ENCODE measurements at regions of chr6 and their contacts with region 1.

Region 1: GRCh38 chr6:104325341-104326172 is 534.2 kb downstream of the HACE1 start:
- DNase-seq: peak; percentile 76
- ATAC-seq: peak; percentile 54
- H3K4me3 ChIP-seq: peak overlapping the region; percentile 34
- H3K27ac ChIP-seq: 0 out of 2 replicates have a peak overlapping the region, but pooled peaks have one; percentile 3
- H3K4me1 ChIP-seq: peaks cover 10% of the 10 kb centered on the region; the same call in 1 of the 2 replicates
- H3K27me3 ChIP-seq: no peaks in the 10 kb centered on the region
- CTCF ChIP-seq: peak; percentile 75

Region 2: DNA sequence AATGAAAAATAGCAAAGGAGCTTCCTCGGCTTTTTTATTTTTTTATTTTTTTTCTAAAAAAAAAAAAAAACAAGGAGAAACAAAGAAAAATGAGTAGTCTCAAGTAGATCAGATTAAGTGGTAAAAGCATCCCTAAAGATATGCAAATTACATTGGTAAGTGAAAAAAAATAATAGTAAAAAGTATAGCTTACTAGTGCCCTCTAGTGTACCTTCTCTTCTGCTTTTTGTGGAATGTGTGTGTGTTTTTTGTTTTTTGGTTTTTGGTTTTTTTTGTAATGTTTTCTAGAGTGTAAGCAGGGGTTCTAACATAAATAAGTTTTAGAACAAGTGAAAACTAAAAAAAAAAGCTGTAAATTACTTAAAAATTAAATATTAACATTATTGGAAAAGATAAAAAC is 527.8 kb before region 1 on chr6:
- CTCF ChIA-PET with region 1: no interaction called
- POLR2A ChIA-PET with region 1: interaction called, 8 read pairs
- intact Hi-C with region 1: loop called (anchors 10 kb)
- DNase-seq: peak; percentile 30
- ATAC-seq: no peak
- H3K4me3 ChIP-seq: no peak overlapping the region
- H3K27ac ChIP-seq: no peak overlapping the region
- H3K4me1 ChIP-seq: no peaks in the 10 kb centered on the region
- H3K27me3 ChIP-seq: no peaks in the 10 kb centered on the region
- CTCF ChIP-seq: peak; percentile 56

Region 3: DNA sequence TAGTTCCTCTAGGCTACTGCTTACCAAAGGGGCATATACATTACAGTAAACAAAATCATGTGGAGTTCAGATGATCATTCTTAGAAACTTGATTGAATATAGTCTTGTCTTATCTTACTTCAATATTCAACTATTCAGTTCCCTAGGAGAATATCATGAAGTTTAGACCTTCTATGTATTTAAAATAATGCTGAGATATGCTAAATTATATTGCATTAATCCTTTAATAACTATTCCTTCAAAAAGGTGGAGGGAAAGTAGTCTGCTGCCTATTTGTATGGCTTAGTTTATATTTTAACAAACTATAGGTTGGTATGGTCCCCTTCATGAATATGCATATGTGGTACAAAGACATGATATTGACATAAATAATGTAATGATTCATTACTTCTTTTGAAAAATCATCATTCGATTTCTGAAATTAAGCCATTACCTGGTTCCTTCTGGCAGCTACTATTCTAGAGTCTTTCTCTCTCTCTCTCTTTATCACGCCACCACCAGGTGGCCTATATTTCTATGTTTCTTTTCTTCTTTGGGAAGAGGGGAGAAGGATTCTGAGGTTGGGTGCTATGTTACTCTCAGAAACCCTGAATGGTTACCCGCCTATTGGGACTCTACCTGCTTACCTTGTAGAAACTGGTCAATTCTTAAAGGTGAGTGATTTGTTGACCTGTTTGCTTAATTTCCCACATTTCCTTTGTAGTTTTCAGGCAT is 321.6 kb before region 1 on chr6:
- CTCF ChIA-PET with region 1: no interaction called
- POLR2A ChIA-PET with region 1: no interaction called
- intact Hi-C with region 1: loop called (anchors 5 kb)
- DNase-seq: peak; percentile 39
- ATAC-seq: no peak
- H3K4me3 ChIP-seq: no peak overlapping the region
- H3K27ac ChIP-seq: no peak overlapping the region
- H3K4me1 ChIP-seq: no peaks in the 10 kb centered on the region
- H3K27me3 ChIP-seq: no peaks in the 10 kb centered on the region
- CTCF ChIP-seq: peak; percentile 54

Region 4: GRCh38 chr6:104182811-104183210 is 142.7 kb before region 1 on chr6:
- CTCF ChIA-PET with region 1: no interaction called
- POLR2A ChIA-PET with region 1: no interaction called
- intact Hi-C with region 1: no loop called
- DNase-seq: peak; percentile 1
- ATAC-seq: no peak
- H3K4me3 ChIP-seq: no peak overlapping the region
- H3K27ac ChIP-seq: no peak overlapping the region
- H3K4me1 ChIP-seq: no peaks in the 10 kb centered on the region
- H3K27me3 ChIP-seq: no peaks in the 10 kb centered on the region
- CTCF ChIP-seq: no peak

Region 5: DNA sequence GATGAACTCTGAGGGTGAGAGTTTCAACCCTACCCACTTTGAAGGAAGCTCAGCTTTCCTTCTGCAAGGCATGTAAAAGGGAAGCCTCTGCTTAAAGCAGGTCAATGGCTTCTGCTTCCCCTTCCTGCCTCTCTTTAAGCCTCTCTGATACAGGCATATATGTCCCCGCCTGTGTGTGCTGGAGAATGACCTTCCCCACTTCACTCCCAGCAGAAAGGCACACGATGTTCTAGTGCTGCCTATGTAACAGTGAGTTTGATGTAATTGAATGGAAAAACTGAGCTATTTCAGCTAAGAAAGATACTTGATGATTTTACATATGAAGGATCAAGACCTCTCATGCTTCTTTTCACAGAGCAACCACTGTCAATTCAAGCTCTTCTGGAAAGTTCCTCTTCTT is 98.0 kb before region 1 on chr6:
- CTCF ChIA-PET with region 1: no interaction called
- POLR2A ChIA-PET with region 1: no interaction called
- intact Hi-C with region 1: loop called (anchors 5 kb)
- DNase-seq: no peak
- ATAC-seq: no peak
- H3K4me3 ChIP-seq: no peak overlapping the region
- H3K27ac ChIP-seq: no peak overlapping the region
- H3K4me1 ChIP-seq: peaks cover 23% of the 10 kb centered on the region
- H3K27me3 ChIP-seq: no peaks in the 10 kb centered on the region
- CTCF ChIP-seq: no peak

Region 6: DNA sequence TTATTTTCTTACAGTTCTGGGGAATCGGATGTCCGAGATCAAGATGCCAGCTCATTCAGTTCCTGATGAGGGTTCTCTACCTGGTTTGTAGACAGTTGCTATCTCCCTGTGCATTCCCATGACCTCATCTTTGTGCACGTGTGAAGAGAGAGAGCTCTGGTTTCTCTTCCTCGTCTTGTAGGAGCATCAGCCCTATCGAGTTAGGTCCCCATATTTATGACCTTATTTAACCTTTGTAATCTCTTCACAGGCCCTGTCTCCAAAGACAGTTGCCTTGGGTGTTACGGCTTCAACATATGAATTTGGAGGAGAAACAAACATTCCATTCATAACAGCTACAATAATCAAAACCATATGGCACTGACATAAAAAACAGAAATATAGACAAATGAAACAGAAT is 78.8 kb after region 1 on chr6:
- CTCF ChIA-PET with region 1: no interaction called
- POLR2A ChIA-PET with region 1: no interaction called
- intact Hi-C with region 1: loop called (anchors 5 kb)
- DNase-seq: no peak
- ATAC-seq: no peak
- H3K4me3 ChIP-seq: no peak overlapping the region
- H3K27ac ChIP-seq: no peak overlapping the region
- H3K4me1 ChIP-seq: peaks cover 21% of the 10 kb centered on the region
- H3K27me3 ChIP-seq: no peaks in the 10 kb centered on the region
- CTCF ChIP-seq: no peak

Region 7: DNA sequence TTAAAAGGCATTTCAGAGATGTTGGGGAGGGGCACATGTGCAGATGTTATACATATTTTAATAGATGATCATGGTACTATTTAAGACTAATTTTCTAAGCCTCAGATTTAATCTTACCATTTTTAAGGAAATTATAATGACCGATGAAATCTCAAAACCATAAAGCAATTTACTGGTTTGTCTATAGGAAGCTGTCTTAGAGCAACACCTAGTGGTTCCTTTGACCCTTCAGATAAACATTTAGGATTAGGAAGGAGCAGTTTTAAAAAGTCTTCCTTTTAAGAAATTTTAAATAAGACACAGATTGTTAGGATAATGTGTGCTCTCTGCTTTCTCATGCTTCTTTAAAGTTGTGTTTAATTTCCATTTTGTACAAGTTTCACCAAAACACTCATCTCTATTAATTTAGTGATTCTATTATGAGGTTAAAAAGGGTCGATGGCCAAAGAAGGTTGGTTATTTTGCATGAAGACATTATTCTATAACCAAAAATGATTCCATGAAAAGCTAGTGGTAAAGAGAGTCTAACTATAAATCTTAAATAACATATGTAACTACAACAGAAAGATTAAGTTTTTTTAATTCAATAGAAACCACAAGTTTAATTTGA is 157.8 kb after region 1 on chr6:
- CTCF ChIA-PET with region 1: interaction called, 6 read pairs
- POLR2A ChIA-PET with region 1: no interaction called
- intact Hi-C with region 1: loop called (anchors 1 kb)
- DNase-seq: peak; percentile 44
- ATAC-seq: no peak
- H3K4me3 ChIP-seq: no peak overlapping the region
- H3K27ac ChIP-seq: no peak overlapping the region
- H3K4me1 ChIP-seq: no peaks in the 10 kb centered on the region
- H3K27me3 ChIP-seq: no peaks in the 10 kb centered on the region
- CTCF ChIP-seq: peak; percentile 67

Measured in PC-3 (cell line).